IMR-90 (cell line): ENCODE measurements at regions of chr3 and their contacts with region 1.

Region 1: DNA sequence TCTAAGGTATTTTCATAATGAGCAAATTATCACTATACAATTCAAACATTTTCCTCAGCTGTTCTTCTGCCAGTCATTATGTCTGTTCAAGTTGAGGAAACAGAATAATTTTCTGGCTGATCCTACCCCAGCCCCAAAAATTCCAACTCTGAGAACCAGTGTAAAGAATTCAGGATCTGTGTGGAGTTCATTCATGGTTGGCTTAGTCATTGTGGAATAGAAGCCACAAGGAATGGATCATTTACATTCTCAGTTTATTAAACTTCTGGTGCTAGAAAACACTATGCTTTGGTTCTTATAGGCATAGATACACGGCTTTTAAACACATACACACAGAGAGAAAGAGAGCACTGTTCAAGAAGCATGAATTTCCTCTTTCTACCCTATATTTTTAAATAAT is 134.6 kb downstream of the CMSS1 start:
- DNase-seq: peak; percentile 86
- ATAC-seq: peak; percentile 83
- H3K4me3 ChIP-seq: no peak overlapping the region
- H3K27ac ChIP-seq: peak overlapping the region; percentile 66; the same call in 1 of the 2 replicates
- H3K4me1 ChIP-seq: peaks cover 12% of the 10 kb centered on the region
- H3K27me3 ChIP-seq: no peaks in the 10 kb centered on the region
- CTCF ChIP-seq: no peak
- POLR2A ChIP-seq: no peak
- RAD21 ChIP-seq: no peak

Region 2: GRCh38 chr3:99901200-99901926 is 50.9 kb before region 1 on chr3:
- CTCF ChIA-PET with region 1: no interaction called
- POLR2A ChIA-PET with region 1: no interaction called
- dilution Hi-C with region 1: no loop called
- in situ Hi-C with region 1: no loop called
- intact Hi-C with region 1: loop called (anchors 5 kb)
- DNase-seq: peak; percentile 77
- ATAC-seq: peak; percentile 73
- H3K4me3 ChIP-seq: peak overlapping the region; percentile 5; the same call in 1 of the 2 replicates
- H3K27ac ChIP-seq: no peak overlapping the region; the same call in 1 of the 2 replicates
- H3K4me1 ChIP-seq: peaks cover 8% of the 10 kb centered on the region
- H3K27me3 ChIP-seq: no peaks in the 10 kb centered on the region
- CTCF ChIP-seq: no peak
- POLR2A ChIP-seq: no peak
- RAD21 ChIP-seq: no peak

Region 3: DNA sequence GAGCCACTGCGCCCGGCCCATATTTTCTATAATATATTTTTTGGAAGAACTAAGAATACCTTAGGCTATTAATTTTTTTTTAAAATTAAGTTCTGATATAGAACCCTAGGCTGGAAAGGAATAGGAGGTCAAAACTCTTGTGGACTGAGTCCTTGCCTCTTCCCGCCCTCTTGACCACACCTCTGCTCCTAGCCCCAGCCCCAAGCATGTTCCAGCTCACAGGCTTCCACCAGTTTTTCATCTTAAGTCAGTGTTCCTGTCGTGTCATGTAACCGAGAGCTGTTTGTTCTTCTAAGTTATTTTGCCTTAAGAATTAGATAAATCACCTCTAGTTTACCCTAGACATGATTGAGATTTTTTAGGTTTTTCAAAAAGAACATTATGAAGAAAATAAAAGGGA is 24.7 kb before region 1 on chr3:
- CTCF ChIA-PET with region 1: interaction called, 10 read pairs
- POLR2A ChIA-PET with region 1: no interaction called
- dilution Hi-C with region 1: no loop called
- in situ Hi-C with region 1: no loop called
- intact Hi-C with region 1: no loop called
- DNase-seq: no peak
- ATAC-seq: no peak
- H3K4me3 ChIP-seq: no peak overlapping the region
- H3K27ac ChIP-seq: no peak overlapping the region
- H3K4me1 ChIP-seq: 0 out of 2 replicates have a peak, but pooled peaks cover 2% of the 10 kb centered on the region
- H3K27me3 ChIP-seq: no peaks in the 10 kb centered on the region
- CTCF ChIP-seq: no peak
- POLR2A ChIP-seq: no peak
- RAD21 ChIP-seq: no peak

Region 4: DNA sequence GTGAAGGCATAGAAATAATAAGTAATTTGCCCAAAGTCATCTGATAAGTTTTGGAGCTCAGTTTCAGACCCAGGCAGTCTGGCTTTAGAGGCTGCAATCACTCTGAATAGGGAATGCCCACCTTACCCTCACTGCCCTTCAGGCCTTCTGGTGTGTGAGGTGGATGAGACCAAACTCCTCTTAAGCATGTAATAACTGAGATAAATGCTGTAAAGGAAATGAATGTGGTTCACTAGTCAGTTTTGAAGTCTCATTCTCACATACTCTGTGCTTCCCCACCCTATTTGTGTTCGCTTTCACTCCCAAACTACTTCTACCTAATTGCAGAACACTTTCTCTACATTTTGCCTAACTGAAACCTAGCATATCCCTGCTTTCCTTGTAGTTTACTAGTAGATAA is 17.9 kb after region 1 on chr3:
- CTCF ChIA-PET with region 1: no interaction called
- POLR2A ChIA-PET with region 1: no interaction called
- dilution Hi-C with region 1: no loop called
- in situ Hi-C with region 1: no loop called
- intact Hi-C with region 1: no loop called
- DNase-seq: no peak
- ATAC-seq: no peak
- H3K4me3 ChIP-seq: no peak overlapping the region
- H3K27ac ChIP-seq: no peak overlapping the region
- H3K4me1 ChIP-seq: peaks cover 12% of the 10 kb centered on the region
- H3K27me3 ChIP-seq: no peaks in the 10 kb centered on the region
- CTCF ChIP-seq: no peak
- POLR2A ChIP-seq: no peak
- RAD21 ChIP-seq: no peak